ENCODE measurements at regions of chr17 and their contacts with region 1.

Region 1: DNA sequence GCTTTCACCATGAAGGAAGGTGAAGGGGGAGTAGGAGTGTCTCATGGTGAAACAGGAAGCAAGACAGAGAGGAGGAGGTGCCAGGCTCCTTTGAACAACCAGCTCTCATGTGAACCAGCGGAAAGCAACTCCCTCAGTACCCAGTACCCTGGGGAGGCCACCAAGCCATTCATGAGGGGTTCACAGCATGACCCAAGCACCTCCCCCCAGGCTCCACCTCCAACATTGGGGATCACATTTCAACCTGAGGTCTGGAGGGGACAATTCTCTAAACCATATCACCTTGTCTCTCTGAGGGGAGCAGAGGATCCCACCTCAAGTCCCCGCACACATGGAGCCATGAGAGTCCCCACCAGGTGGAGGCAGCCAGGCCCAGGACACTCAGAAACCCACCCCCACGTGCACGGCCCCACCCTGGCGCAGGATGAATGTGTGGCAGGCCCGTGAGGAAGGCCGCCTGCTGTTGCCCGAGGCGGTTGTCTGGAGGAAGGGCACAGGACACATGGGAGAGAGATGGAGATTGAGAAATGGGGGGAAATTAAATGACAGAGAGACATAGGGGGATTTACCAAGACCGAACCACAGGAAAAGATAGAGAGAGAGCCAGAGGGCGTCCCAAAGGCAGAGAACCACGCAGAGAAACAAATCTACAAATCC is 85.9 kb downstream of the TMEM132E start:
- DNase-seq: no peak
- ATAC-seq: no peak
- H3K4me3 ChIP-seq: no peak overlapping the region
- H3K27ac ChIP-seq: no peak overlapping the region
- H3K4me1 ChIP-seq: no peaks in the 10 kb centered on the region
- H3K27me3 ChIP-seq: peaks cover 8 to 19% (median 12%) of the 10 kb centered on the region in 3 donors
- CTCF ChIP-seq: no peak
- POLR2A ChIP-seq: no peak

Region 2: GRCh38 chr17:34606763-34607162 is 58.5 kb before region 1 on chr17:
- in situ Hi-C with region 1: loop called in 1 of 4 experiments (anchors 10 kb)
- intact Hi-C with region 1: no loop called
- DNase-seq: no peak
- ATAC-seq: no peak
- H3K4me3 ChIP-seq: no peak overlapping the region
- H3K27ac ChIP-seq: no peak overlapping the region
- H3K4me1 ChIP-seq: no peaks in the 10 kb centered on the region
- H3K27me3 ChIP-seq: peaks cover 0 to 35% (median 18%) of the 10 kb centered on the region in 3 donors
- CTCF ChIP-seq: no peak
- POLR2A ChIP-seq: no peak

Measured in gastrocnemius medialis (tissue), 4 donors.